ENCODE measurements at regions of chr1 and their contacts with region 1.

Region 1: GRCh38 chr1:52552505-52553361 is at the start of gene TUT4:
- DNase-seq: peak in 4 of 5 donors; percentile 64 to 83 (median 65)
- H3K4me3 ChIP-seq: peak within 1 kb of the TSS; percentile 91
- H3K4me3 Mint-ChIP-seq: peak within 1 kb of the TSS in 5 of 7 donors; percentile 70 to 78 (median 75)
- H3K27ac ChIP-seq: peak within 1 kb of the TSS; percentile 79
- H3K27ac Mint-ChIP-seq: peak within 1 kb of the TSS in 7 of 8 donors; percentile 30 to 86 (median 81)
- H3K4me1 ChIP-seq: peaks cover 37% of the 10 kb centered on the region
- H3K4me1 Mint-ChIP-seq: peaks cover 30 to 45% (median 42%) of the 10 kb centered on the region in 3 donors
- H3K27me3 ChIP-seq: no peaks in the 10 kb centered on the region
- H3K27me3 Mint-ChIP-seq: no peaks in the 10 kb centered on the region
- total RNA-seq, gene TUT4: 54.1 to 63.1 TPM

Region 2: DNA sequence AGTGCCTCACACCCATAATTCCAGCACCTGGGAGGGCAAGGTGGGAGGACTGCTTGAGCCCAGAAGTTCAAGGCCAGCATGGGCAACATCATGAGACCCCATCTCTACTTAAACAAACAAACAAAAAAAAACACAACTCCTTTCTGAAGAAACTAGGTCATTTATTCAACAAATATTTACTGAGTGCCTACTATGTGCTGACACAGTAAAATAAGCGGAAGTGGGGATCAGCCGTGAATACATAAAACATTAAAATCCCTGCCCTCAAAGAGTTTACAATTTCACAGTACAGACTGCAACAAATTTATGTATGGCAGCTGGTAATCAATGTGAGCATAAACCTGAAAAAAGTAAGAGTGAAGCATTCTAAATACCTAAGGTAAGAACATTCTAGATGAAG is 65.1 kb before region 1 on chr1:
- CTCF ChIA-PET with region 1: no interaction called
- POLR2A ChIA-PET with region 1: no interaction called
- DNase-seq: no peak
- H3K4me3 ChIP-seq: no peak overlapping the region
- H3K4me3 Mint-ChIP-seq: no peak overlapping the region
- H3K27ac ChIP-seq: no peak overlapping the region
- H3K27ac Mint-ChIP-seq: peak overlapping the region in 4 of 8 donors; percentile 19 to 96 (median 56)
- H3K4me1 ChIP-seq: no peaks in the 10 kb centered on the region
- H3K4me1 Mint-ChIP-seq: peaks cover 0 to 9% (median 2%) of the 10 kb centered on the region in 3 donors
- H3K27me3 ChIP-seq: no peaks in the 10 kb centered on the region
- H3K27me3 Mint-ChIP-seq: no peaks in the 10 kb centered on the region

Region 3: GRCh38 chr1:52569449-52570210 is 16.9 kb after region 1 on chr1:
- CTCF ChIA-PET with region 1: interaction called, 5 read pairs
- POLR2A ChIA-PET with region 1: interaction called, 13 read pairs
- DNase-seq: no peak
- H3K4me3 ChIP-seq: no peak overlapping the region
- H3K4me3 Mint-ChIP-seq: no peak overlapping the region
- H3K27ac ChIP-seq: no peak overlapping the region
- H3K27ac Mint-ChIP-seq: peak overlapping the region in 1 of 8 donors; percentile 12
- H3K4me1 ChIP-seq: no peaks in the 10 kb centered on the region
- H3K4me1 Mint-ChIP-seq: peaks cover 0 to 22% (median 0%) of the 10 kb centered on the region in 3 donors
- H3K27me3 ChIP-seq: no peaks in the 10 kb centered on the region
- H3K27me3 Mint-ChIP-seq: no peaks in the 10 kb centered on the region

Region 4: DNA sequence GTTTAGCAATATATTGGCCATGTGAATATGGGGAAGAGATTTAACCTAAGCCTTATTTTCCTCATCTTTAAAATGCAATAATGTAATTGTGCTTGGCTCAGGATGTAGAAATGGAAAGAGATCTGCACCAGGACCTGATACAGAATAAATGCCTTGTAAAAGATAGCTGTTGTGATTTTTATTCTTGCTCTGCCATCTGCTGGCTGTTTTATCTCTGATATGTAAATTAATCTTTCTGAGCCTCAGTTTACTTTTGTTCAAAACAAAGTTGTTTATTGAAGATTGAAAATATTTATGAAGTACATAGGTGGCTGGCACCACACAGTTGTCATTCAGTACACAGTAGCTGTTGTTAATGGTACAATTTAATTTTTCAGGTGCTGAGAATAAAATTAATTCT is 195.4 kb after region 1 on chr1:
- CTCF ChIA-PET with region 1: no interaction called
- POLR2A ChIA-PET with region 1: no interaction called
- DNase-seq: no peak
- H3K4me3 ChIP-seq: no peak overlapping the region
- H3K4me3 Mint-ChIP-seq: no peak overlapping the region
- H3K27ac ChIP-seq: no peak overlapping the region
- H3K27ac Mint-ChIP-seq: peak overlapping the region in 1 of 8 donors; percentile 17
- H3K4me1 ChIP-seq: no peaks in the 10 kb centered on the region
- H3K4me1 Mint-ChIP-seq: peaks cover 14 to 30% (median 20%) of the 10 kb centered on the region in 3 donors
- H3K27me3 ChIP-seq: no peaks in the 10 kb centered on the region
- H3K27me3 Mint-ChIP-seq: no peaks in the 10 kb centered on the region